ENCODE measurements at regions of chr11 and their contacts with region 1.

Region 1: DNA sequence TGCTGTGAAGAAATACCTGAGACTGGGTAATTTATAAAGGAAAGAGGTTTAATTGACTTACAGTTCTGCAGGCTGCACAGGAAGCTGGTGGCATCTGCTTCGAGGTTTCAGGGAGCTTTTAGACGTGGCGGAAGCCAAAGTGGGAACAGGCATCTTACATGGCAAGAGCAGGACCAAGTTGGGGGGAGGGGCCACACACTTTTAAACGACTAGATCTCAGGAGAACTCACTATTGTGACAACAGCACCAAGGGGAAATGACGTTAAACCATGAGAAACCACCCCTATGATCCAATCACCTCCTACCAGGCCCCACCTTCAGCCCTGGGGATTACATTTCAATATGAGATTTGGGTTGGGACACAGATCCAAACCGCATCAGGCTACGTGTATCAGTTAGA is 11.1 kb upstream of the SCGB1D4 start:
- DNase-seq: no peak
- H3K4me3 ChIP-seq: no peak overlapping the region
- CTCF ChIP-seq: no peak

Region 2: GRCh38 chr11:62169091-62169847 is 140.7 kb before region 1 on chr11:
- CTCF ChIA-PET with region 1: interaction called, 19 read pairs
- POLR2A ChIA-PET with region 1: no interaction called
- DNase-seq: no peak
- H3K4me3 ChIP-seq: no peak overlapping the region
- CTCF ChIP-seq: no peak

Region 3: DNA sequence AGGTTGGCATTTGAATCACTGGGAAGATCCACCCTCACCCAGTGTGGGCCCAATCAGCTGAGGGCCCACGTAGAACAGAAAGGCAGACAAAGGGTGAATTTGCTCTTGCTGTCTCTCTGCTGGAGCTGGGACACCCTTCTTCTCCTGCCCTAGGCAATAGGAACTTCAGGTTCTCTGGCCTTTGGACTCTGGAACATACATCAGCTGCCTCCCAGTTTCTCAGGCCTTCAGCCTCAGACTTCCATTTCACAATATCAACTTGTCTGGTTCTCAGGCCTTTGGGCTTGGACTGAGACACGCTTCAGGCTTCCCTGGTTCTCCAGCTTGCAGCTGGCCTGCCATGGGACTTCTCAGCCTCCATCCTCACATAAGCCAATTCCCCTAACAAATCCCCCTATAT is 12.5 kb after region 1 on chr11:
- CTCF ChIA-PET with region 1: interaction called, 37 read pairs
- POLR2A ChIA-PET with region 1: no interaction called
- DNase-seq: no peak
- H3K4me3 ChIP-seq: no peak overlapping the region
- CTCF ChIP-seq: no peak